ENCODE measurements at regions of chr2 and their contacts with region 1.

Region 1: DNA sequence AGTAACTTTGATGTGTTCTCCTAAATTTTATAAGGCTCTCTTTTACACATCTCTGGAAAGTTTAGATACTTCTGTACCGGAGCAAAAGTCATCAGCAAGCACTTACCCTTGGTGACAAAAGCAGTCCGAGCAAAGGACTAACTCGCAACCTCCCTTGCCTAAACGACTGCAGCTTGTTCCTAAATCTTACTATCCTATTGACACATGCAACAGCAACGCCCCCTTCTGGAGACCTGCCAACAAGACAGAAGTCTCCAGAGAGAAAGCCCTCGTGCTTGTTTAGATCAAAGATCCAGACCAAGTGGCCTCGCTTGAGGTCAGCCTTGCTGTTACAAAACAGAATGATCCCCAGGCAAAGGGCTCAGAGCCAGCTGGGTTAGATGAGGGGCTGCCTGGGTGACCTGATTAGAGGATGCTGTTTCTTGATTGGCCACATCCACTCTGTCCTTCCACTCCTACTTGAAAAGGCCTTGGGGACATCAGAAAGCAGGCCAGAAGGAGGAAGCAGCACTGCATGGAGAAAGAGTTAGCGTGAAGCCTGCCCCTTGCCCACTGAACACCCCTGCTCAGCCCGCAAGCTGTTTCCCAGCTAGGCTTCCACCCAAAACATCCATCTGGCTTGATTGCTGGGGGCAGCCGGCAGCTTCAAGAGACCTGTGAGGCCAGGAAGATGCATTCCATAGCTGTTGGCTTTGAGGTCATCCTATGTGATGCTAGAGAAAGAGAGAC is 94.3 kb downstream of the HNRNPLL start:
- DNase-seq: peak; percentile 93
- H3K4me3 Mint-ChIP-seq: no peak overlapping the region
- H3K27ac Mint-ChIP-seq: no peak overlapping the region
- H3K4me1 Mint-ChIP-seq: peaks cover 8% of the 10 kb centered on the region
- H3K27me3 Mint-ChIP-seq: no peaks in the 10 kb centered on the region

Region 2: DNA sequence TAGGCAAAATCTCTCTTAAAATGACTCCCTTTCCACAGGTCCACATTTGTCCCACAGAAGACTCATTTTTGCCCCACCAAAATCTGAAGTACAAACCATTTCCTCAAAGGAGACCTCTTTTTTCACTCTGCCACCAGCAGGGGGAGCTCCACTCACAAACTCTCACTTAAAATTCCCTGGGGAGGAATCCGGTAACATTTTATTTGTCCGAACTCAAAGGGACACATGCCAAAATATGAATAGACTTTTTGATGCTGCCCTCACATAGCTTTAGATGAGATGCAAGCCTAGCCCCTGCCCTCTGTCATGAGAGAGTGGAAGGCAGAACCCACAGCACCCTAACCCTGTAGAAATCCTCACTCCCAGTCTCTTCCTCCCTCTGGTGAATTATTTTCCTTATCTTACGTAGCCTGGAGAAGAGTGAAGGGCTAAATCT is 526.3 kb before region 1 on chr2:
- intact Hi-C with region 1: loop called (anchors 5 kb)
- DNase-seq: peak; percentile 86
- H3K4me3 Mint-ChIP-seq: no peak overlapping the region
- H3K27ac Mint-ChIP-seq: no peak overlapping the region
- H3K4me1 Mint-ChIP-seq: peaks cover 8% of the 10 kb centered on the region
- H3K27me3 Mint-ChIP-seq: peaks cover 13% of the 10 kb centered on the region

Region 3: GRCh38 chr2:38315707-38316333 is 192.7 kb before region 1 on chr2:
- intact Hi-C with region 1: loop called (anchors 1 kb)
- DNase-seq: peak; percentile 81
- H3K4me3 Mint-ChIP-seq: no peak overlapping the region
- H3K27ac Mint-ChIP-seq: no peak overlapping the region
- H3K4me1 Mint-ChIP-seq: peaks cover 13% of the 10 kb centered on the region
- H3K27me3 Mint-ChIP-seq: no peaks in the 10 kb centered on the region

Measured in activated CD4-positive, alpha-beta T cell treated with anti-CD3 and anti-CD28 coated beads, Interleukin-2, amount 10 ng/mL, durations not matched to agents 24 days and 14 days (primary cell).